MCF 10A (cell line): ENCODE measurements at regions of chr3 and their contacts with region 1.

Region 1: DNA sequence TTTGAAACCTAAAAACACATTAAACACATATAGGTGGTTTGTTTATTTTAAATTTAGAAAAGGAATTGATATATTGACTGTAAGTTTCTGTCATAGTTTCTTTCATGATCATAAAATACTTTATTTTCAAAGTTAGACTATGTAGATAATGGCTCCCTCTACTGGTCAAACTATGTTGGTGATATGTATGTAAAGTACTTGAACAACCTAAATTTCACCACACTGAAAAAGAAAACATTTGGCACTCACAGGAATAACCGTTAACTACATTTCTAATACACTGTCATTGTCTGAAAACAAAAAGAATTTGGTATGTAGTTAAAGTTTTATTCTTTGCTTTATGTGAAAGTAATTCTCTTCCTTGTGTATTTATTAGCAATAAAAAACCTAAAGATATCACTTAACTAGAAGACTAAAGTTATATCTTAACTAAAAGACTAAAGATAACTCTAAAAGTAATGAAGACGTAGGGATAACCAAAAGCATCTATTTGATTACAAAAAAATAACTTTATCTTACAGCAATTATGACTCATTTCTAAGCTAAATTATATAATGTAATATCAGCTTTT is 427.5 kb downstream of the VGLL3 start:
- DNase-seq: peak; percentile 49
- H3K4me3 Mint-ChIP-seq: no peak overlapping the region
- H3K27ac Mint-ChIP-seq: no peak overlapping the region
- H3K4me1 Mint-ChIP-seq: no peaks in the 10 kb centered on the region
- H3K27me3 Mint-ChIP-seq: peaks cover 64% of the 10 kb centered on the region
- CTCF ChIP-seq: peak; percentile 46

Region 2: DNA sequence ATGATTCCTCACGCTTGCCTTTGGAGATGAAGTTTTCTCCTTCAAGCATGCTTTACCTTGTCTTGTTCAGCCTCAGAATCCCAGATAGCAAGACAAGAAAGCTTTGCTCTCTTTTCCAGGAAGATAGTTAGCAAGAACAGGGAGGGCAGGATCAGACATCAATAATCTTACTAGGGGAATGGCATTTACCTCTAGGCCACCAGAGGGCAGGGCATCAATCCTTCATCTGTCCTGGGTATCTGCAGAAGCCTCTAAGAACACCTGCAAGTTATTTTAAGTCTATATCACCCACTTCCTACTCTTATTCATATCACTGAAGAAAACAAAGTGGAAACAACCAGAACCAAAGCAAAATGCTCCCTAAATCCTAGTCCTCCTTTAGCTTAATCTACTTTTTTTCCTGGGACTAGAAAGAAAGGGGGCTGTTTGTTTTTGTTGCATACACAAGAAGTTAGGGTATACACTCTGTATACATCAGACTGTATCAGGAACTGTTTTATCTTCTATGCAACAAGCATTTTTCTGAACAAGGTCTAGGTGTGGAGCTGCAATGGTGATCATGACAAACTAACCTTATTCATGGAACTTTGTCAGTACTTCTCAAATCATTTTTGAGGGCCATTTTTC is 742.2 kb before region 1 on chr3:
- CTCF ChIA-PET with region 1: interaction called, 37 read pairs
- POLR2A ChIA-PET with region 1: no interaction called
- intact Hi-C with region 1: loop called (anchors 1 kb)
- DNase-seq: peak; percentile 46
- H3K4me3 Mint-ChIP-seq: no peak overlapping the region
- H3K27ac Mint-ChIP-seq: no peak overlapping the region
- H3K4me1 Mint-ChIP-seq: no peaks in the 10 kb centered on the region
- H3K27me3 Mint-ChIP-seq: peaks cover 24% of the 10 kb centered on the region
- CTCF ChIP-seq: peak; percentile 43

Region 3: DNA sequence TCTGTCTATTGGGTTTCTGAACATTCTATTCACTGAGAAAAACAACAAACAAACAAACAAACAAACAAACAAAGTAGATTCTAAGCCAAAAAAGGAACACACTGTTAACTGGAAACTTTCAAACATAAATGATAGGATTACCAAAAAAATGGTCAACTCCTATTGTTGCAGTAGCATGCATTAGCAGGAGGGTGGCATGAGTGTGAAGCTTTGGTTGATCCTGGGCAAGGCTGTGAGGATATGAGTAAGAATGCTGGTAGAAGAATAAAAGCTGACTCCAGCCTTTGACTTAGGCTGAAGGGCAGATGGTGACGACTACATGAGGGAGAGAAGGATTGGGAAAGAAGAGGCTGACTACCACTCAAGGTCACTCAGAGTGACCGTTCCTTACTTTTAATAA is 382.8 kb before region 1 on chr3:
- CTCF ChIA-PET with region 1: no interaction called
- POLR2A ChIA-PET with region 1: no interaction called
- intact Hi-C with region 1: loop called (anchors 1 kb)
- DNase-seq: peak; percentile 49
- H3K4me3 Mint-ChIP-seq: no peak overlapping the region
- H3K27ac Mint-ChIP-seq: no peak overlapping the region
- H3K4me1 Mint-ChIP-seq: no peaks in the 10 kb centered on the region
- H3K27me3 Mint-ChIP-seq: peaks cover 12% of the 10 kb centered on the region
- CTCF ChIP-seq: peak; percentile 20

Region 4: DNA sequence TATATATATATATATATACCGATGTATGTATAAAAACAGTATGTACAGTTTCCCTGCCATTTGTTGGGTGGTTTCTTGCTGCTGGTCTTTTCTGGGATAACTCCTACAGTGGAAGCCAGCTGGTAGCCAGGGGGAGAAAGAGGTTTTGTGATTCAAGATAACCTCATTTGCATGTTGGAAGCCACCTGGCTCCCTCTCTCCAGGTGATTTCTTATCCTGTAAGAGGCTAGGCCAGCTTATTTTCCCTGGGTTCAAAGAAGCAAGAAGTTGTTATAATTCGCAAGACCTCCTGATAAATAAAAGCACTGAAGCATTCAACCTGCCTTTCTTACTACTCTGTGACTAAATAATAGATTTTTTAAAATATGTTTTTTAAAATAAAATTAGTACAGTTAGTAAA is 15.8 kb before region 1 on chr3:
- CTCF ChIA-PET with region 1: interaction called, 11 read pairs
- POLR2A ChIA-PET with region 1: no interaction called
- intact Hi-C with region 1: no loop called
- DNase-seq: no peak
- H3K4me3 Mint-ChIP-seq: no peak overlapping the region
- H3K27ac Mint-ChIP-seq: no peak overlapping the region
- H3K4me1 Mint-ChIP-seq: no peaks in the 10 kb centered on the region
- H3K27me3 Mint-ChIP-seq: peaks cover 37% of the 10 kb centered on the region
- CTCF ChIP-seq: no peak

Region 5: GRCh38 chr3:86793786-86794185 is 230.3 kb after region 1 on chr3:
- CTCF ChIA-PET with region 1: no interaction called
- POLR2A ChIA-PET with region 1: no interaction called
- intact Hi-C with region 1: no loop called
- DNase-seq: peak; percentile 75
- H3K4me3 Mint-ChIP-seq: peak overlapping the region; percentile 49
- H3K27ac Mint-ChIP-seq: peak overlapping the region; percentile 98
- H3K4me1 Mint-ChIP-seq: peaks cover 22% of the 10 kb centered on the region
- H3K27me3 Mint-ChIP-seq: no peaks in the 10 kb centered on the region
- CTCF ChIP-seq: no peak